ENCODE measurements at regions of chr7 and their contacts with region 1.

Region 1: GRCh38 chr7:66779669-66780409 is 39.3 kb downstream of the RABGEF1 start:
- DNase-seq: no peak
- H3K4me3 Mint-ChIP-seq: no peak overlapping the region
- H3K27ac Mint-ChIP-seq: no peak overlapping the region
- H3K4me1 Mint-ChIP-seq: peaks cover 4% of the 10 kb centered on the region
- H3K27me3 Mint-ChIP-seq: no peaks in the 10 kb centered on the region

Region 2: GRCh38 chr7:66474441-66474840 is 305.4 kb before region 1 on chr7:
- CTCF ChIA-PET with region 1: no interaction called
- intact Hi-C with region 1: no loop called
- DNase-seq: no peak
- H3K4me3 Mint-ChIP-seq: no peak overlapping the region
- H3K27ac Mint-ChIP-seq: no peak overlapping the region
- H3K4me1 Mint-ChIP-seq: no peaks in the 10 kb centered on the region
- H3K27me3 Mint-ChIP-seq: no peaks in the 10 kb centered on the region

Region 3: DNA sequence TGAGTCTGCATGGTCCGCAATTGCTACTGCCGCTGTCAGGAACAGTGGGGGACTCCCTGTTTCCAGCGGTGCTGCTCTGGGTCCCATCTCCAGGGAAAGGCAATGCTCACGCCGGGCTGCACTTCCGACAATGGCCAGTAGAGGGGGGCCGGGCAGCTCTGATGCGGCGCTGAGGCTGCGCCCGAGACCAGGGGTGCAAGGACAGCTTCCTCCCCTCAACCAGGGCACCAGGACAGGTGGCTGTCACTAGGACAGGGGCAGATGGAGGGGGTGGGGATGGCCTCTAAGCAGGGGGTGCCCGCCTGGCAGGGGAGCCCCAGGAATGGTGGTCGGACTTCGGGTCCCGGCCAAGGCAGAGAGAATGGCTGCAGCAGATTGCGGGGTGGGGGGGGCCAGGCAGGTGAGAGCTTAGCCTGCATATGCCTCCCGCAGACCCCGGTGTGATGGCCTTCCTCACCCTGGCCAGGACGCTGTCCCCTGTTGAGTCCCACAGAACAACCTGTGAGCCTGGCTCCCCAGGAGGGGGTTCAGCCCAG is 222.2 kb before region 1 on chr7:
- CTCF ChIA-PET with region 1: no interaction called
- intact Hi-C with region 1: loop called (anchors 10 kb)
- DNase-seq: peak; percentile 78
- H3K4me3 Mint-ChIP-seq: no peak overlapping the region
- H3K27ac Mint-ChIP-seq: no peak overlapping the region
- H3K4me1 Mint-ChIP-seq: peaks cover 3% of the 10 kb centered on the region
- H3K27me3 Mint-ChIP-seq: no peaks in the 10 kb centered on the region